ENCODE measurements at regions of chr15 and their contacts with region 1.

Region 1: DNA sequence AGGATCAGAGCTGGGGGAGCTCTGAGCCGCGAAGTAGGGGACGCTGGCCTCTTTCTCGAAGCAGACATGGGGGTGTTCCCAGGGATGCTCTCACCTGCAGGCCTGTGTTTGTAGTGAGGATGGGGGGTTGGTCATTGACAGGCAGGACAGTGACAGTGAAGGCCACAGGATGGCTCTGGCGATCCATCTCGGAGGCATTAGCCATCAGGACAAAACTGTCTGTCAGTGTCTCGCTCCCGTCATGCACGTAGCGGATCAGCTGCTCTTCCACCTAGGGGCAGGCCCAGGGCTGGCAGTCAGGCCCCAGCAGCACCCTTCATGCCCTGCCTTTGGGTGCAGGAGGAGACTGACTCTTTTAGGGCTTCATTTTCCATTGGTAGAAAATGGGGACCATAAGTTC is 28.0 kb downstream of the CSPG4 start:
- DNase-seq: no peak
- H3K4me3 ChIP-seq: no peak overlapping the region
- CTCF ChIP-seq: no peak

Region 2: DNA sequence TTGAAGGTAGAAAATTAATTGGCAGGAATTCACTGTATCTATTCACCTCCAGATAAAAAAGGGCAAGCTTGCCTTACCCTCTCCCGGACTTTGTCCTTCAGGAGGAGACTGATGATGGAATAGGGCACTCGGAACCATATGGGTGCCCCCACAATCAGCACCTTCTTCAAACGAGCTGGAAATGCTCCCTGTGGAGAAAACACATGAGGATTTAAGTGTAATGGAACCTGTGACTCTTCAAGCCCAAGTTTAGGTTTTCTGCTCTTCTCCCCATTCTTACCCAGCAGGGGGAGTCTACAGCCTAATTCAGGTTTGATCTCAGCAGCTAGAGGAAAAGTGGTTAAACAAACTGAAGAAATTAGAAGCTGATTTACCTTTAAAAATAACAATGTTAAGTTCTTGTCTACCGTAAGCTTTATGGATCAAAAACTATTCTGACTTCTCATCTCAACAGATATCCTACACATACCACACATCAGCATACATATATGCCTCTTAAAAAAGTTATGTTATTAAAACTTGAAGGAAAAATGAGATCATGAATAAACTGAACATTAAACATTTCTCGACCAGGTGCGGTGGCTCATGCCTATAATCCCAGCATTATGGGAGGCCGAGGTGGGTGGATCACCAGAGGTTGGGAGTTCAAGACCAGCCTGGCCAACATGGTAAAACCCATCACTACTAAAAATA is 175.7 kb before region 1 on chr15:
- CTCF ChIA-PET with region 1: interaction called, 17 read pairs
- POLR2A ChIA-PET with region 1: no interaction called
- DNase-seq: no peak
- H3K4me3 ChIP-seq: no peak overlapping the region
- CTCF ChIP-seq: peak; percentile 54

Region 3: GRCh38 chr15:75666823-75667501 is 17.7 kb before region 1 on chr15:
- CTCF ChIA-PET with region 1: interaction called, 48 read pairs
- POLR2A ChIA-PET with region 1: no interaction called
- DNase-seq: peak; percentile 99
- H3K4me3 ChIP-seq: no peak overlapping the region
- CTCF ChIP-seq: no peak

Region 4: GRCh38 chr15:75672646-75673425 is 11.8 kb before region 1 on chr15:
- CTCF ChIA-PET with region 1: interaction called, 48 read pairs
- POLR2A ChIA-PET with region 1: no interaction called
- DNase-seq: peak; percentile 80
- H3K4me3 ChIP-seq: no peak overlapping the region; the same call in none of the 2 replicates
- CTCF ChIP-seq: no peak

Region 5: GRCh38 chr15:75732809-75733451 is 48.3 kb after region 1 on chr15:
- CTCF ChIA-PET with region 1: interaction called, 11 read pairs
- POLR2A ChIA-PET with region 1: no interaction called
- DNase-seq: no peak
- H3K4me3 ChIP-seq: no peak overlapping the region
- CTCF ChIP-seq: peak; percentile 86

Region 6: DNA sequence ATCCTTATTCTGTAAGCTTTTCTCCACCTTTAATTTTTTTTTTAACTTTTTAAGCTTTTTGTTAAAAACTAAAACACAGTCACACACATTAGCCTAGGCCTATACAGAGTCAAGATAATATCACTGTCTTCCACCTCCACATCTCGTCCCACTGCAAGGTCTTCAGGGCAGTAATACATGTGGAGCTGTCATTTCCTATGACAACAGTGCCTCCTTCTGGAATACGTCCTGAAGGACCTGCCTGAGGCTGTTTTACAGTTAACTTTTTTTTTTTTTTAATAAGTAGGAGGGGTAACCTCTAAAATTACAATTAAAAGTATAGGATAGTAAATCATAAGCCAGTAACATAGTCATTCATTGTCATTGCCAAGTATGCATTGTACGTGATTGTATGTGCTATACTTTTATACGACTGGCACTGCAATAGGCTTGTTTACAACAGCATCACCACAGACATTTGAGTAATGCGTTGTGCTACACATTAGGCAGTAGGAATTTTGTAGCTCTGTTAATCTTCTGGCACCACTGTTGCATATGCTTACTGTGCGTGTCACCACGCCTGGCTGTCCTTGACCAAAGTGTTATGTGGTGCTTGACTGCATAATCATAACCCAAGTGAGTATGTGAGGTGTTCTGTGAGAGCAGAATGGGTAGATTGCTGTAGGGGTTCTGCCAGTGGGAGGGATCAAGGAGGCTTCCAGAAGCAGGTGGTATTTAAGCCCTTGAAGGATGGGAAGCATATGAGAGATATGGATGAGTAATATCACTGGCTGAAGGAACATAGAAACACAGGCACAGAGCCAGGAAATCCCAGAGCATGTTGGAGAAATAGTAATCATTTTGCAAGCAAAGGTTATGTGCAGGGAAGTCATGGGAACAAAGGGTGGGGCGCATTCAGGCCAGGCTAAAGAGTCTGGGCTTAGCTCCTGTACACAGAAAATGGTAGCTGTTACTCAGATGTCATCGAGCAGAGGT is 237.4 kb after region 1 on chr15:
- CTCF ChIA-PET with region 1: interaction called, 12 read pairs
- POLR2A ChIA-PET with region 1: no interaction called
- DNase-seq: peak; percentile 37
- H3K4me3 ChIP-seq: no peak overlapping the region
- CTCF ChIP-seq: peak; percentile 35